ENCODE measurements at regions of chr1 and their contacts with region 1.

Region 1: DNA sequence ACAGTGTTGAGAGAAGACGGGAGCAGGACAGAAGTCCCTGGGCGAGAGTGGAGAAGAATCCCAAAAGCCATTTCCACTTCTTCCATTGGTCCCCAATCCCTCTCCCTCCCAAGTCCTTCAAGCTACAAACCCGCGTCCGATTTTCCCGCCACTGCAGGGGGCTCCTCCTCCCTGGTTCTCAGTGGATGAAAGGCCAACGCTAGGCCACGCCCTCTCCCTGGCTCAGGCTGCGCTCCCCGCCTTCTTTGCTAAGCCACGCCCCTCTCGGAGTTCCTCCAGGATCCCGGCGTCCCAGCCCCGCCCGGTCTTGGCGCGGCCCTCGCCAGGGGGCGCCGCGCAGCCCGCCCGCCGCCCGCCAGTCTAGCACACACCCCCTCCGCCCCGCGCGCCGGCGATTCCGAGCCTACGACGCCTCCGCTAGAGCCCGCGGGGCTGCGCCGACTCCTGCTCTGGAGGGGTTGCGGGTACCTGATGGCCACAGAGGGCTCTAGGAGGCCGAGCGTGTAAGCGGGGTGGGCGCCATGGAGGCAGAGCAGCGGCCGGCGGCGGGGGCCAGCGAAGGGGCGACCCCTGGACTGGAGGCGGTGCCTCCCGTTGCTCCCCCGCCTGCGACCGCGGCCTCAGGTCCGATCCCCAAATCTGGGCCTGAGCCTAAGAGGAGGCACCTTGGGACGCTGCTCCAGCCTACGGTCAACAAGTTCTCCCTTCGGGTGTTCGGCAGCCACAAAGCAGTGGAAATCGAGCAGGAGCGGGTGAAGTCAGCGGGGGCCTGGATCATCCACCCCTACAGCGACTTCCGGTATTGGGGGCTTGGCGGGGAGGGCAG is at the start of gene HCN3:
- DNase-seq: peak; percentile 97
- H3K4me3 ChIP-seq: peak within 1 kb of the TSS; percentile 15 to 68 (median 53)
- H3K27ac ChIP-seq: no peak within 1 kb of the TSS
- H3K4me1 ChIP-seq: peaks cover 15% of the 10 kb centered on the region
- H3K27me3 ChIP-seq: peaks cover 0 to 2% of the 10 kb centered on the region in 2 experiments
- CTCF ChIP-seq: peak; percentile 54 to 76
- POLR2A ChIP-seq: no peak
- total RNA-seq, gene HCN3: 1.8 and 3.3 TPM in 2 replicates

Region 2: DNA sequence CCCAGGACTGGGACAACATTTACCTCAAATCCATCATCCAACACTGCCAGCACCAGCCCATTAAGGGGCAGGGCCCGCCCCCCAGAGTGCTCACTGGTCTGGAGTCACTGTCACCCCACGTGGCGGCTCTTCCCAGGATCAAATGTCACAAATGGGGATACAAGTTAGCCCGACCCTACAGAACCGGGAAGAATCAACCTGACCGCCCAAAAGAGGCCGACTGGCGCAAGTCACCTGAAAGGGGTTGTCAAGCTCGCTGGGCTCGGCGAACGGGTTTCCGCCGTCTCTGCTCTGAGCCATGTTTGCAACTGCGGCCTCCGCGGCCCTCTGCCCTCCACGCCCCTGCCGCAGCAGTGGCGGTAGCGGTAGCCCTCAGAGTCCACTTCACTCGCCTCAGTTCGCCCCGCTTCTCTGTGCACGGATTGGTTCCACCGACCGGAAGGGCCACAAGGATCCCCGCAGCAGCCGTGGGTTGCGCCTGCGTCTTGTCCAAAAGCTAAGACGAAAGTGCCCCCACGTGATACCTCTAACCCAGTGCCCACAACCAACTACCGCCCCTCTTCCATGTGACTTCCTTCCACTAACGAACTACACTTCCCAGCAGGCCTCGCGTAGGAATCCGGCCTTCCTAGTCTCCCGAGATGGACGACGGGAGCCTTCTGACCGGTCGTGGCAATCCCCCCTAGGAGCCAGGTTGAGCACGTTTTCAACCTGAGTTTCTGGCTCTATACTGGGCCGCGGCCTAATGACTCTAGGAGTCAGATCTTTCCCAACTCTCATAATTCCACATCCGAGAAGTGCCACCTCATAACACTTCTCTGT is 15.2 kb before region 1 on chr1 and contains the start of gene SCAMP3:
- CTCF ChIA-PET with region 1: interaction called, 10 read pairs
- POLR2A ChIA-PET with region 1: interaction called, 6 read pairs
- dilution Hi-C with region 1: no loop called
- intact Hi-C with region 1: loop called (anchors 1 kb)
- DNase-seq: peak; percentile 99
- H3K4me3 ChIP-seq: peak within 1 kb of the TSS; percentile 51 to 74 (median 64)
- H3K27ac ChIP-seq: peak within 1 kb of the TSS; percentile 6
- H3K4me1 ChIP-seq: peaks cover 8% of the 10 kb centered on the region
- H3K27me3 ChIP-seq: no peaks in the 10 kb centered on the region
- CTCF ChIP-seq: no peak
- POLR2A ChIP-seq: peak; percentile 97
- total RNA-seq, gene SCAMP3: 80.1 and 80.8 TPM in 2 replicates

Region 3: DNA sequence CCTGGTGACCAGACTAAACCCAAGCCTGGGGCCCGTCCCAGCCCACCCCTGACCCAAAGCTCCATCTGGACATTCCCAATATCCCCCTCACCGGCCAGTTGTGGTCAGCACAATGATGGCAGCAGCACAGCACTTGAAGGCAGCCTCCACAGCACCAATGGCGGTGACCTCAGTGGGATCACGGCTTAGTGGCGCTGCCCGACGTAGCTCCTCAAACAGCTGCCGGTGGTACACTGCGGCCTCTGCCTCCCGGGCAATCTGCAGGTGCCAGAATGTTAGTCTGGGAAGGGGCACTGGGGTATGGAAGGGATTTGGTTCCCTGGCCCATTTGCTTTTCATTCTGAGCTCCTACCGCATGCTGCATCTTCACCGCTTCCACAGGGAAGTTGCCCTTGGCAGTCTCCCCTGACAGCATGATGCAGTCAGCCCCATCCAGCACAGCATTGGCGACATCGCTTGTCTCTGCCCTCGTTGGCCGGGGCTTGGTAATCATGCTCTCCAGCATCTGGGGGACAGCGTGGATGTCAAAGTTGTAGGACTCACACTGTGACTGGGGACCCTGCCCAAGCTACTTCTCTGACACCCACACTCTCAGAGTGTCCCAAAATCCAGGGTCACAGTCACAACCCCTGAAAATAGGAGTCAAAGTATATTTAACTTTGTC is 15.9 kb after region 1 on chr1:
- CTCF ChIA-PET with region 1: interaction called, 10 read pairs
- POLR2A ChIA-PET with region 1: no interaction called
- dilution Hi-C with region 1: no loop called
- intact Hi-C with region 1: no loop called
- DNase-seq: no peak
- H3K4me3 ChIP-seq: no peak overlapping the region
- H3K27ac ChIP-seq: no peak overlapping the region
- H3K4me1 ChIP-seq: no peaks in the 10 kb centered on the region
- H3K27me3 ChIP-seq: peaks cover 37 to 40% of the 10 kb centered on the region in 2 experiments
- CTCF ChIP-seq: no peak
- POLR2A ChIP-seq: no peak

Region 4: GRCh38 chr1:155308493-155309422 is 31.5 kb after region 1 on chr1 and contains the start of gene FDPS:
- CTCF ChIA-PET with region 1: interaction called, 10 read pairs
- POLR2A ChIA-PET with region 1: interaction called, 4 read pairs
- dilution Hi-C with region 1: no loop called
- intact Hi-C with region 1: loop called (anchors 1 kb)
- DNase-seq: peak; percentile 99
- H3K4me3 ChIP-seq: peak within 1 kb of the TSS; percentile 47 to 86 (median 84)
- H3K27ac ChIP-seq: peak within 1 kb of the TSS; percentile 88
- H3K4me1 ChIP-seq: peaks cover 24% of the 10 kb centered on the region
- H3K27me3 ChIP-seq: no peaks in the 10 kb centered on the region
- CTCF ChIP-seq: no peak
- POLR2A ChIP-seq: peak; percentile 87
- total RNA-seq, gene FDPS: 630 and 670 TPM in 2 replicates

Region 5: GRCh38 chr1:155657463-155657862 is 380.2 kb after region 1 on chr1:
- CTCF ChIA-PET with region 1: no interaction called
- POLR2A ChIA-PET with region 1: no interaction called
- dilution Hi-C with region 1: no loop called
- intact Hi-C with region 1: no loop called
- DNase-seq: no peak
- H3K4me3 ChIP-seq: no peak overlapping the region
- H3K27ac ChIP-seq: no peak overlapping the region
- H3K4me1 ChIP-seq: no peaks in the 10 kb centered on the region
- H3K27me3 ChIP-seq: peaks cover 3 to 4% of the 10 kb centered on the region in 2 experiments
- CTCF ChIP-seq: no peak
- POLR2A ChIP-seq: peak; percentile 32